ENCODE measurements at regions of chr16 and their contacts with region 1.

Region 1: DNA sequence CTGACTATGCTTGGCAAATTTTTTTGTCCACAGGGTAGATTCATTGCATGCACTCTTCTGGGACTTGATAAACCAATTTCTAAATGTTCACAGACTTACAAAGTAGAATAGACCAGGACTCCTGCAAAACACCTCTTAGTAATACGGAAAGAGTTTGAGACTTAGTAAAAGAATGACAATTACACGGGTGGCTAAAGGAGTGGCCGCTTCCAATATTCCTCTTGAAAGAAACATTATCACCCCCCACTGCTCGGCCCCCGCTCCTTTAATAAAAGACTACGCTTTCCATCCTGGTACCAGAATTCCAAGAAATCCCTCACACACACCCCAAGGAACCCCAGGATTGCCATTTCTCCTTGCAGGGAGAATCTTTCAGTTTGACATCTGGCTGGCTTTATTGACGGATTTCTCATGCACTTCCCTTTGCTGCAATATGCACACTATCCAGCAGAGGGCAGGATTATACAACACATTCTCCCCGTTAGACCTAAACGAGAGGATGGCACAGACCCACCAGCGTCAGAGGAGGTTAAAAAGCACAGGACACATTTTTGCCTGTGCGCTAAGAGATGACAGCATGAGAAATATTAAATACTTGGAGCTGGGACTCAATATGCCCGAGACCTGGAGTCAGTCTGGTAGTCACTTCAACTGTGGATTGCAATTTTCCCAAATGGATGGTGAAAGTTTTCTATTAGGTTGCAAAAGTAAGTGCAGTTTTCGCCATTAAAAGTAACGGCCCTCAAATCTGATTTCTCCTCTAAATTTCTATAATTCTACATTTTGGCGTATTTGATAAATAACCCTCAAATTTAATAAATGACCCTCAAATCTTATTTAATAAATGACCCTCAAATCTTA is 46.6 kb upstream of the NUDT7 start:
- DNase-seq: peak; percentile 33 to 61 (median 41)
- H3K4me3 ChIP-seq: no peak overlapping the region
- H3K4me3 Mint-ChIP-seq: no peak overlapping the region
- H3K27ac ChIP-seq: no peak overlapping the region
- H3K27ac Mint-ChIP-seq: no peak overlapping the region
- H3K4me1 ChIP-seq: no peaks in the 10 kb centered on the region
- H3K4me1 Mint-ChIP-seq: no peaks in the 10 kb centered on the region
- H3K27me3 ChIP-seq: no peaks in the 10 kb centered on the region
- H3K27me3 Mint-ChIP-seq: peaks cover 1 to 10% of the 10 kb centered on the region in 2 donors

Region 2: DNA sequence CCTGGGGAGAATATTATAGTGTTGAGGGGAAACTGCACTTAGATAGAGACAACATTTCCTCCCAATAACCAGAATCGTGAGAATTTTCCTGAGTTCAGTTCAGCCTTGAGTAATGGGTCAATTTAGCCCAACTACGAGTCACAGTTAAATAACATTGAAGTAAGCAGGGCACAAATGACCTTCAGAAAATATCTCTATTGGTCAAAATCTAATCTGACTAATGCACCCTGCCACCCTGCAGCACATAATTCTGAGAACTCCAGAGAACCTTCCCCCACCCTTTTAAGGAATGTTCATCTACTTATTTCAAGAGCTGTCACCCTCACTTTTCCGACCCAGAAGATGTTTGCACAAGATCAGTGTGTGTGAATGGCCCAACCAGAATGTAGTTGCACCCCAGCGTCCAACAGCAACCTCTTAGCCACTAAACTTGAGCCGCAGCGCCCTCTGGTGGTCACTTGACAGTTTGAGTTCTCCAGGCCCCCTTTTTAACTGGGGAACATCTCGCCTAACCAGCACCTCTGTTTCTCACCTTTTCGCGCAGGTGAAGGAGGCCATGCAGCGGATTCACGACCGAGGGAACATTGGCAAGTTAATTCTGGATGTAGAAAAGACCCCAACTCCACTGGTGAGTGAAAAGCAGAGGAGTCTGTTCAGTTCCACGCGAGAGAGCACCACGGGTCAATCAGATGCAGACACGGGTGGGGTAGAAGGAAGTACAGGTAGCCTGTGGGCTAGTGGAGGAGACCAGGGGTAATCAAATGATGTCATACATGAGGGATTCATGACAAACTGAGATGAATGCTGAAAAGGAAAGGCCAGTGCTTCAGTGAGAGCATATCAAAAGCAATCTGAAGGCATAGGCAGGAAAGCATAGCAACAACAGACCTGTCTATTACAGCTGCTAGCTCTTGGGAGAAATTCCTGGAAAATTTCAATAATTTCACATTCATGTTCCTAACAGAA is 295.9 kb after region 1 on chr16:
- CTCF ChIA-PET with region 1: interaction called, 36 read pairs
- POLR2A ChIA-PET with region 1: no interaction called
- DNase-seq: peak; percentile 35 to 77 (median 60)
- H3K4me3 ChIP-seq: no peak overlapping the region
- H3K4me3 Mint-ChIP-seq: no peak overlapping the region
- H3K27ac ChIP-seq: no peak overlapping the region
- H3K27ac Mint-ChIP-seq: no peak overlapping the region
- H3K4me1 ChIP-seq: no peaks in the 10 kb centered on the region
- H3K4me1 Mint-ChIP-seq: no peaks in the 10 kb centered on the region
- H3K27me3 ChIP-seq: no peaks in the 10 kb centered on the region
- H3K27me3 Mint-ChIP-seq: peaks cover 4 to 29% of the 10 kb centered on the region in 2 donors

Region 3: GRCh38 chr16:78002915-78003538 is 327.3 kb after region 1 on chr16:
- CTCF ChIA-PET with region 1: interaction called, 10 read pairs
- POLR2A ChIA-PET with region 1: no interaction called
- DNase-seq: peak; percentile 25 to 63 (median 27)
- H3K4me3 ChIP-seq: no peak overlapping the region
- H3K4me3 Mint-ChIP-seq: peak overlapping the region in 1 of 7 donors; percentile 6
- H3K27ac ChIP-seq: no peak overlapping the region
- H3K27ac Mint-ChIP-seq: peak overlapping the region in 1 of 8 donors; percentile 6
- H3K4me1 ChIP-seq: no peaks in the 10 kb centered on the region
- H3K4me1 Mint-ChIP-seq: no peaks in the 10 kb centered on the region
- H3K27me3 ChIP-seq: no peaks in the 10 kb centered on the region
- H3K27me3 Mint-ChIP-seq: peaks cover 5 to 19% of the 10 kb centered on the region in 2 donors

Region 4: GRCh38 chr16:78065319-78065718 is 389.6 kb after region 1 on chr16:
- CTCF ChIA-PET with region 1: no interaction called
- POLR2A ChIA-PET with region 1: no interaction called
- DNase-seq: no peak
- H3K4me3 ChIP-seq: no peak overlapping the region
- H3K4me3 Mint-ChIP-seq: no peak overlapping the region
- H3K27ac ChIP-seq: no peak overlapping the region
- H3K27ac Mint-ChIP-seq: no peak overlapping the region
- H3K4me1 ChIP-seq: no peaks in the 10 kb centered on the region
- H3K4me1 Mint-ChIP-seq: no peaks in the 10 kb centered on the region
- H3K27me3 ChIP-seq: no peaks in the 10 kb centered on the region
- H3K27me3 Mint-ChIP-seq: peaks cover 15 to 27% of the 10 kb centered on the region in 2 donors

Measured in CD8-positive, alpha-beta memory T cell (primary cell).